Gastrocnemius medialis (tissue), 4 donors: ENCODE measurements at regions of chr14 and their contacts with region 1.

Region 1: GRCh38 chr14:57364659-57365450 is 25.5 kb upstream of the NAA30 start:
- DNase-seq: no peak
- ATAC-seq: no peak
- H3K4me3 ChIP-seq: no peak overlapping the region
- H3K27ac ChIP-seq: no peak overlapping the region
- H3K4me1 ChIP-seq: no peaks in the 10 kb centered on the region
- H3K27me3 ChIP-seq: no peaks in the 10 kb centered on the region
- CTCF ChIP-seq: no peak
- POLR2A ChIP-seq: no peak

Region 2: DNA sequence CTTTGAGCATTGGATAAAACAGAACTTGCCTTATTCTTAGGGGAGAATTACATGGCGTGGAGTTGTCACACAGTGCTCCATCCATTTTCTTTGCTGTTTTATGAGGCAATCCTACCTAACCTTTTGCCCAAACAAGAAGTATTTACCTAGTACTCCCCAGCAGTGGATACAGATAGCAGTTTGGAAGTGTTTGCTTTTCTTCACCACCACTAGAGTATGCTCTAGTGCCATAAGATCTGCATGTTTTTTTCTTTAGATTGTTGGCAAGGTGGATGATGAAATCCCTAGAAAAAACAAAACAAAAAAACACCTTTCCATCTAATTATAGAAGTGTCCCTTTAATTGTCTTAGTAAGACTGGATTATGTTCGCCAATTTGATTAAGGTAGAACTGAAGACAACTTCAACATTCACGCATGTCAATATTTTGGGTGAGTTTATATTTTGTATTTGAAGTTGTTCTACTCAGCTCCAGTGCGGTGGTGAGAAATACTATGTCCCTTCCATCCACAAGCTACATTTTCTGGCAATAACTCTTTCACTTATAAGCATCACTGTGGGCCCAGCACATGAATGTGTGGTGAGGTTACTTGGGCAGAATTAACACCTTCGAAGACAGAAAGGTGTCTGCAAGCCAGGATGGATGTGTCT is 808.8 kb before region 1 on chr14:
- in situ Hi-C with region 1: no loop called
- intact Hi-C with region 1: no loop called
- DNase-seq: no peak
- ATAC-seq: no peak
- H3K4me3 ChIP-seq: no peak overlapping the region
- H3K27ac ChIP-seq: no peak overlapping the region
- H3K4me1 ChIP-seq: no peaks in the 10 kb centered on the region
- H3K27me3 ChIP-seq: no peaks in the 10 kb centered on the region
- CTCF ChIP-seq: peak in 2 of 5 experiments; percentile 23 to 28
- POLR2A ChIP-seq: no peak

Region 3: DNA sequence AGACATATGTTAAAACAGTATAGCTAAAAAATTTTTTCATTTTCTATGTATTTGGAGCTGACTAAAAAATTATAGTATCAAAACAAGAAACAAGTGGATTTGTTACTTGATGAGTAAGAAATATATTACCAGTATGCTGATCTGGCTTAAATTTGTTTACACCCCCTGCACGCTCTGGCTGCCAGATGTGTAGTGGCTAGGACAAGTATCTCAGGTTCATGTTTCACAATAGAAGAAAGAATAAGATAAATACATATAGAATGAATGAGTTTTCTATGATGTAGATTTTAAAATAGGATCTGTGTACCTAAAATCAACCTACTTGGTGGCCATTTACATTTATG is 38.6 kb after region 1 on chr14:
- in situ Hi-C with region 1: no loop called
- intact Hi-C with region 1: loop called (anchors 1 kb)
- DNase-seq: no peak
- ATAC-seq: no peak
- H3K4me3 ChIP-seq: no peak overlapping the region
- H3K27ac ChIP-seq: peak overlapping the region in 3 of 4 donors; percentile 6 to 28 (median 27)
- H3K4me1 ChIP-seq: peaks cover 38 to 45% of the 10 kb centered on the region in 2 donors
- H3K27me3 ChIP-seq: no peaks in the 10 kb centered on the region
- CTCF ChIP-seq: no peak
- POLR2A ChIP-seq: no peak